Adrenal gland (tissue), 19 donors: ENCODE measurements at regions of chr20 and their contacts with region 1.

Region 1: GRCh38 chr20:63056236-63056948 is 49.6 kb upstream of the BHLHE23 start:
- DNase-seq: peak in 4 of 7 donors; percentile 16 to 43 (median 18)
- H3K4me3 ChIP-seq: no peak overlapping the region
- H3K27ac ChIP-seq: no peak overlapping the region
- H3K4me1 ChIP-seq: no peaks in the 10 kb centered on the region
- H3K27me3 ChIP-seq: peaks cover 23% of the 10 kb centered on the region
- CTCF ChIP-seq: peak; percentile 69 to 86 (median 81)
- POLR2A ChIP-seq: no peak

Region 2: DNA sequence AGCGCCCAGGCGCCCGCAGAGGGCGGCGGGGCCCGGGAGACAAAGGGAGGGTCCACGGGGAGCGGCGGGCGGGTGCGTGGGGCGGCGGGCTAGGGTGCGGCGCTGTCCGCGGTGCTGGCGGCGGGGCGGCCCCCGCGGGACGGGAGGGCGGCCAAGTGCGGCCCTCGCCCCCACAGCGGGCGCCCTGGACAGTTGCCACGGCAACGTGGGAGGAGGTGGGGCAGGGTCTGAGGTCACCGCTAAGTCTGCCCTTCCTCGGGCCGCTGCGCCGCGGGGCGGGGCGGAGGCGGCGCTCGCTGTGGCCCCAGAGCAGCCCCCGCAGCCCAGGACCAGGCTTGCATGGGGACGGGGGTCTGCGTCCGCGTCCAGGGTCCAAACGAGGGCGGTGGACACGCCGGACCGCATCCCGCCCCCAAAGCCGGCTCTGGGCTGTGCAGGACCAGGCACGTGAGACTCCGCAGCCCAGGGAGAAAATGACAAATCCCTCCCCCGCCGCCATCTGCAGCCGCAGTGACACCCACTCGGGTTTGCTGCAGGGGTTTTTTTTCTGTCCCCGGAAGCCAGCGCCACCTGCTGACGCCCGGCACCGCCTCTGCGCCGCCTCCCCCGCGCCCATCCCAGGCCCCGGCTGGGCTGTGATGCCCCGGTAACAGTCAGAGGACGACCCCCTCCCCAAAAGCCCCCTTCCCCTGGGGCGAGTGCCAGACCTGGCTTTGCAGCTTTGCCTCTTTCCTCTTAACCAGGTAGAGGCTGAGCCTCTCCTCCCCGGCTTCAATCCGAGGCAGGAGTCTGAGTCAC is 122.7 kb after region 1 on chr20:
- intact Hi-C with region 1: loop called (anchors 5 to 10 kb)
- DNase-seq: peak in 6 of 7 donors; percentile 21 to 33 (median 24)
- H3K4me3 ChIP-seq: peak overlapping the region in 1 of 4 donors; percentile 12
- H3K27ac ChIP-seq: no peak overlapping the region
- H3K4me1 ChIP-seq: peaks cover 0 to 20% of the 10 kb centered on the region in 2 donors
- H3K27me3 ChIP-seq: peaks cover 80% of the 10 kb centered on the region
- CTCF ChIP-seq: peak; percentile 14 to 45 (median 30)
- POLR2A ChIP-seq: no peak

Region 3: DNA sequence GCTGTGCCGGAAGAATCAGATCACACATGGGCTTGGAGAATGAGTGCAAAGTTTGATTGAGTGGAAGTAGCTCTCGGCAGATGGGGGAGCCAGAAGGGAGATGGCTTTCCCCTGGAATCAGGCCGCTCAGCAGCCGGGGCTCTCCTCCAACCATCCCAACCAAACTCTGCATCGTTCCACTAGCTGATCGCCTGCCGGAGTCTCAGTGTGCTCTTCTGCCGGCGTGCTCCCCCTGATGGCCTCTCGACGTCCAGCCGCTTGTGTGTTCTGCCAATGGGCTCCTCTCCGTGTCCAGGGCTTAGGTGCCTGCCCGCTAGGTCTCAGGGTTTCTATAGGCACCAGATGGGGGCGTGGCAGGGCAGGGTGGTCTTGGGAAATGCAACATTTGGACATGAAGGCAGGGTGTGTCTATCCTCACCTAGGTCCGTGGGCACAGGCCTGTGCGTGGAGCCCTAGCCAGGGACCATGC is 174.4 kb after region 1 on chr20:
- intact Hi-C with region 1: loop called in 1 of 2 experiments (anchors 5 kb)
- DNase-seq: peak; percentile 38 to 75 (median 66)
- H3K4me3 ChIP-seq: no peak overlapping the region
- H3K27ac ChIP-seq: no peak overlapping the region
- H3K4me1 ChIP-seq: no peaks in the 10 kb centered on the region
- H3K27me3 ChIP-seq: peaks cover 4% of the 10 kb centered on the region
- CTCF ChIP-seq: peak; percentile 15 to 60 (median 52)
- POLR2A ChIP-seq: no peak